Calu3 (cell line): ENCODE measurements at regions of chr10 and their contacts with region 1.

Region 1: DNA sequence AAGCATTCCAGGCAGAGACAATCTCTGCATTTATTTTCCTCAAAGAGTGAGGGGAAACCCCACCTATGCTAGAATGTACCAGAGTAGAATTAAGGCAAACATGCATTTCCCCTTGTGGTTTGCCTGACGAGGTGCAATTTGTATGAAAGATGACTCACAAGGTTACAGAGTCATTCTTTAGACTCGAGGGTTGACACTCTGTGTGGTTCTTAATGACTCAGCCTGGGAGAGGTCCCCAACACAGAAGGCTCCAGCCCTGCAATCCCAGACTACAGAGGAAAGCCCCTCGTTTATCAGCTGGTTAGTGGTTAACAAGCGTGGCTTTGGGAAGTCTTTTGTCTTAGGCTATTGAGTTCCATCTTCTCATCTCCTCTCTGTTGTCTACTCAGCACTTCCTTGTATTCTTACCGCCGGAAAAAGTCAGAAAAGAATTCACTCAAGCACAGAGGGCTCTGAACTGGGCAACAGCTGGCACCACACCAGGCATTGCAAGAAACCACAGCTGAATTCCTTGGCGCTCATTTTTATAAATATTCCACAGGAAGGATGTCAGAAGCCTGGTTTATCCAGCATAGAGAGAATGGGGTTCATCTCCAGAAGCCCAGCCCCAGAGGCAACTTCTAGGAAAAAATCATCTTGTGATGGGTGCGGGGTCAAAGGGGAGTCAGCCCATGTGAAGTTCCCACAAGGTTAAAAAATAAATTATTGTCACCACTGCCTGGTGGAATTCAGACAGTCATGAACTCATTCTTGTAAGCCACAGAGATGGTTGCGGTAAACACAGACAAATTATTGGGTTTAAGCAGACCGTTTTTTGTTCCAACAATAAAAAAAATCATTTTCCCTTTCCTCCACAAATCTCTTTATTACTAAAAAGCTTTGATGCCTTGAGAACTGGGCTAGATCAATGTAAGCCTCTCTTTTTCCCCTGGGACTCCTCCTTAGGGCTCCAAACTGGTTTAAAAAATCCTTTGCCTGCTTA is 24.5 kb upstream of the SVIL start:
- DNase-seq: peak; percentile 84
- H3K4me3 Mint-ChIP-seq: peak overlapping the region; percentile 7
- H3K27ac Mint-ChIP-seq: peak overlapping the region; percentile 90
- H3K4me1 Mint-ChIP-seq: peaks cover 53% of the 10 kb centered on the region
- H3K27me3 Mint-ChIP-seq: no peaks in the 10 kb centered on the region
- CTCF ChIP-seq: no peak

Region 2: GRCh38 chr10:29443745-29444523 is 215.3 kb before region 1 on chr10:
- CTCF ChIA-PET with region 1: no interaction called
- intact Hi-C with region 1: no loop called
- DNase-seq: no peak
- H3K4me3 Mint-ChIP-seq: no peak overlapping the region
- H3K27ac Mint-ChIP-seq: no peak overlapping the region
- H3K4me1 Mint-ChIP-seq: peaks cover 20% of the 10 kb centered on the region
- H3K27me3 Mint-ChIP-seq: no peaks in the 10 kb centered on the region
- CTCF ChIP-seq: no peak

Region 3: DNA sequence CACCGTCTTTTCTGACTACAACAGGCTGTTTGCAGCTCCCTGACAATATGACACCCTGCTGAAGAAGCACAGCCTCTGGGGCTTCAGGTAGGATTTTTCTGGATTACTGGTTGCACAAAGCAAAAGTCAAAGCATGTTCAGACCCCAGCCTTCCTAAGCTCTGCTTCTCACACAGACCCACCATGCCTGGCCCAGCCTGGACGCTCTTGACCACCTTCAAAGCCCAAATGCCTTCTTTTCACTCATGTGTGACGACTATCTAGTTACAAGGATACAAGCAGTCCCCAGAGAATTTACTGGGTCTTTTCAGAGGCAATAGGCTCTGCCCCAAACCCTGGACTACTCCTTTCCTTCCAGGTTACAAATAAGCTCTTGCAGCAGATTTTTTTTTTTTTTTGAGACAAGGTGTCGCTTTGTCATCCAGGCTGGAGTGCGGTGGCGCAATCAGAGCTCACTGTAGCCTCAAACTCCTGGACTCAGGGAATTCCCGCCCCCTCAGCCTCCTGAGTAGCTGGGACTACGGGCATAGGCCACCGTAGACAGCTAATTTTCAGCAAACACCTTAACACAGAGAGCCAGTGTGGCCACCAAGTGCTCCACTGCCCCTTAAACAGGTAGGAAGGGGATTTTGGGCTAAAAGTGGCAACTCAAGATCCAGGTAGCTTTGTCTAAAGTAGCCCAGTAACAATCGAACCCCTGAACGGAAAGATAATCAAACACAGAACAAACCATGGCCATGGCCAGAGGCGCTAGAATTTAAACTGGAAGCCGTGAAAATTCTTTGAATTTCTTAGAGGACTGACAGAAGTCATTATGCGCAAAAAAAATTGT is 40.7 kb before region 1 on chr10:
- CTCF ChIA-PET with region 1: no interaction called
- intact Hi-C with region 1: loop called (anchors 5 kb)
- DNase-seq: peak; percentile 81
- H3K4me3 Mint-ChIP-seq: peak overlapping the region; percentile 66
- H3K27ac Mint-ChIP-seq: peak overlapping the region; percentile 92
- H3K4me1 Mint-ChIP-seq: peaks cover 65% of the 10 kb centered on the region
- H3K27me3 Mint-ChIP-seq: no peaks in the 10 kb centered on the region
- CTCF ChIP-seq: no peak

Region 4: GRCh38 chr10:29635711-29636144 is 23.5 kb before region 1 on chr10:
- CTCF ChIA-PET with region 1: no interaction called
- intact Hi-C with region 1: loop called (anchors 2 kb)
- DNase-seq: peak; percentile 42
- H3K4me3 Mint-ChIP-seq: peak overlapping the region; percentile 28
- H3K27ac Mint-ChIP-seq: peak overlapping the region; percentile 62
- H3K4me1 Mint-ChIP-seq: peaks cover 65% of the 10 kb centered on the region
- H3K27me3 Mint-ChIP-seq: no peaks in the 10 kb centered on the region
- CTCF ChIP-seq: no peak

Region 5: DNA sequence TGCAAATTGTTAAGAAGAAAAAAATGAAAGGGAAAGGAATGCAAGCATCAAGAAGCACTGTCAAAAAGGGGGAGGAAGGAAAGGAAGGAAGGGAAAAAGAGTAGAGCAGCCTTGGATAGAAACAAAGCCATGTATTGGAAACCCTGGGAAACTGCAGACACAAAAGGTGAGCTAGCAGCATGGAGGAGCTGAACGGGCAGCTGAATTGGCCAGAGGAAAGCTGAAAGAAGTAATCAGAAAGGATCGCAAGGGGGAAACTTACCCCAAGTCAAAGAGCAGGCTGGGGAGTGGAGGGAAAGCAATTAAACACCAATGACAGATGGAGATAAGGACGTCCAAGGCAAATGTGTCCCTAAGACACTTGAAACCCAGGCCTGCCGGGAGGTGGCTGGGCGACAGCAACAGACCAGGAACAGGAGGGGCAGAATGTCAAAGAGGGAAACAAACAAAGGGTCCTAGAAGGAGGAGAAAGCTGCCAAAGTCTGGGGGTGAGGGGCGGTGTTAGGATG is 69.3 kb after region 1 on chr10:
- CTCF ChIA-PET with region 1: no interaction called
- intact Hi-C with region 1: loop called (anchors 2 kb)
- DNase-seq: no peak
- H3K4me3 Mint-ChIP-seq: no peak overlapping the region
- H3K27ac Mint-ChIP-seq: no peak overlapping the region
- H3K4me1 Mint-ChIP-seq: peaks cover 71% of the 10 kb centered on the region
- H3K27me3 Mint-ChIP-seq: no peaks in the 10 kb centered on the region
- CTCF ChIP-seq: no peak